ENCODE measurements at regions of chr15 and their contacts with region 1.

Region 1: GRCh38 chr15:75367913-75368688 is at the start of gene MAN2C1:
- DNase-seq: peak; percentile 98

Region 2: DNA sequence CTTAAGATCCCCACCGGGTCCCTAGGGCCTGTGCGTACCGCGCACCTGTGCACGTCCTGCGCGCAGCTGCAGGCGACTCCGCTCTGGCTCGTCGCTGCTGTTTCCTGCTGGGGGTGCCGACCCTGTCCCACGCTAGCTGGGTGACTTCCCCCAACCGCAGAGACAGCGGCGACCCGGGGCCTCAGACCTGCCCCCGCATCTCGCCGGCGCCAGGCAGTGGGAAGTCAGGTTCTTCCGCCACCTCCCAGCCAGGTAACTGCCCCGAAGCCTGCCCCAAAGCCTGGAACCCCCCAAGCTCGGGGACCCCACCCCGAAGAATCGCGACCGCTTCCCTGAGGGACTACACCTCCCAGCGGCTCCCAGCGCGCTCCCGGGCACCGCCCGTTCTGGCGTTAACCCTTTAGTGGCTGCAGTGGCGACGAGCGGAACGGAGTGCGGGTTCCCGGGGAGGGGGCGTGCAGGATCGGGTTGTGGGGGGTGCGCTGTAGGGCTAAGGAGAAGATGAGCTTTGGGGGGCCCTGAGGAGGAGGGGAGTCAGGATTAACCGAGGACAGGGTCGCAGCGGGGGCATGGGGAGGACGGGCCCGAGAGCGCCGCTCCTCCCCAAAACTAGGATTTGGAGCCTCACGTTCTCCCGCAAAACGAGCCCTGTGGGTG is 20.8 kb before region 1 on chr15:
- CTCF ChIA-PET with region 1: interaction called, 9 read pairs
- POLR2A ChIA-PET with region 1: interaction called, 58 read pairs
- DNase-seq: peak; percentile 74

Region 3: DNA sequence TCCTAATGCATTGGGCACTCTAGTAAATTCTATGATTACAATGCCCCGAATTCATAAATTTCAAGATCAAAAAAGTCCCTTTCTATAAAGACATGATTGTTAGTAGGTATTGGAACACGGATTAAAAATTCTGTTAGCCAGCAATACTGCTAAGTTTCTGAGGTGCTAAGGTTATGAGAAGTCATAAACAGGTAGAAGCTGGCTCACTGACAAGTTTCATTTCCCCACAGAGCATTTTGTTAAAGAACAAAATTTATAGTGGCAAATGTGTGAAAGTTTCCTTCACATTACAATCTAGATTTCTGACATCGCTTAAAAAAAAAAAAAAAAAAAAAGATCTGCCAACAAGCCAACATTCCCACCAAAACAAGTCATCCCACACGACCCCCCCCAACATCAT is 12.7 kb after region 1 on chr15:
- CTCF ChIA-PET with region 1: interaction called, 4 read pairs
- POLR2A ChIA-PET with region 1: interaction called, 19 read pairs
- DNase-seq: no peak

Region 4: GRCh38 chr15:75453703-75454470 is 85.8 kb after region 1 on chr15:
- CTCF ChIA-PET with region 1: interaction called, 24 read pairs
- POLR2A ChIA-PET with region 1: interaction called, 139 read pairs
- DNase-seq: peak; percentile 90

Region 5: DNA sequence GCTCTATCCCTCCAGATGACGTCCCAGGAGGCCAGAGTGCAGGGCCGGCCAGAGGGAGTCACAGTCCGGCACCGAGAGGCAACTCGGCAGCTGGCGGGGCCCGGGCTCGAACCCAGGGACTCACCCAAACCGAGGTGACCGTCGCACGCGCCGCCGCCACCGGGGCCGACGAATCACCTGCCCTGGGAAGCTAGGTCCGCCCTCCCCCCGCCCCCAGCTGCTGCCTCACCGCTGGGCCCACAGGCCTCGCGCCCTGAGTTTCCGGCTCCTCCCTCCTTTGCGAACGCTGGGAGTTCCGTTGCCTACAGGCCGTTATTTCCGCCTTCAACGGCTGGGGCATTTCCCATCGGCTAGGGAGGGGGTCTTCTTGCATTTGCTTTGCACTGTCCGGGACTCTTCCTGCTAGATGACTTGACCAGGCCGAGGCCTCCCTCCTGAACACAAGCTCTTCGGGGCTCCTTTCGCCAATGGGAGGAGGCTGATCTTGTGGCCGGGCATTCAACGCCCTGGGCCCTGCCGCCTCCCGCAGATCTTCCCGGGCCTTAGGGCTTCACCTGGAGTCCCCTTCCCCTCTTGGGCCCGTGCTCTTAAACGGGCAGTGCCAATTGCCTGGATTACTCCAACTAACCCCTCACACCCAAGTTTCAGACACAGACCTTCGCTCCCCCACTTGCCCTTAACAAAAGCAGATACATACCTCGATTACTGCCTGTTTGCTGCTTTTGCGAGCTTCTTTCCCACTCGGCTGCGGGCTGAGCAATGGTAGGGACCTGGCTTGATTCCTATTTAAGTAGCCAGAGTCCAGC is 257.6 kb after region 1 on chr15 and contains the start of gene SNUPN:
- CTCF ChIA-PET with region 1: no interaction called
- POLR2A ChIA-PET with region 1: interaction called, 31 read pairs
- DNase-seq: peak; percentile 98

Region 6: DNA sequence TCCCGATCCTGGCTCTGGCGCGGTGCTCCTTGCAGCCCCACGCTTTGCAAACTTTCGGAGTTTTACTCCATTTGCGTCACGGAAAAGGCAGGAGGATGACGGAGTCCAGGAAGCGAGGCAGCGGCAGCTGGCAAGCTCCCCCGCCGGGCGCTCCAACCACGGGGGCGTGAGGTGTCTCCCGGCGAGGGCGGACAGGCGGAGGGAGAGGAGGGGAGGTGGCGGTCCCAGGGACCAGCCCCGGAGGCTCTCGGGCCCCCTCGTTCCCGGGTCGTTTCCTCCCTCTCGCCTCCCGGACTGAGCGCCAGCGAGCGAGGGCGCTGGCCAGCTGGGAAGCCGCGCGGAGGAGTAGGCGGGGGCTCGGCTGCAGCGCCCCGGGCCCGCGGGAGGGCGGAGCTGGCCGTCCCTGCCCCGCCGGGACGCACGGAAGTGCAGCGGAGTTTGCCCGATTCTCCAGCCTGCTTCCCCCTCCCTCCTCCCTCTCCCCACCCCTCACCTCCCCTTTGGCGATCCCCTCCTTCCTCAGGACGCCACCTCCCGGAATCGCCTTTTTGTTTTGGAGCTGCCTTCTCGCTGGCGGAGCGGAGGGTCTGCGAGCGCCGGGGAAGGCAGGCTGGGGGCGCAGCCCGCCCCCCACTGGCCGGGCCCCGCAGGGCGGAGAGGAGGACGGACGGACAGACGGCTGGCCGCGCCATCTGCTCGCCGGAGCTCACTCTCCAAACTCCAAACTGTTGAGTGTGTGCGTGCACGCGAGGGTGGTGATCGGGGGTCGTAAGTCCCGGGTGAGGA is 279.5 kb after region 1 on chr15 and contains the start of gene SNX33:
- CTCF ChIA-PET with region 1: interaction called, 12 read pairs
- POLR2A ChIA-PET with region 1: interaction called, 26 read pairs
- DNase-seq: peak; percentile 78

Measured in HEK293T (cell line).